ENCODE measurements at regions of chr22 and their contacts with region 1.

Region 1: GRCh38 chr22:26679003-26679629 is 21.7 kb downstream of the MIAT start:
- DNase-seq: peak; percentile 89
- ATAC-seq: peak; percentile 77
- H3K4me3 Mint-ChIP-seq: no peak overlapping the region
- H3K27ac Mint-ChIP-seq: no peak overlapping the region; the same call in 1 of the 2 replicates
- H3K4me1 Mint-ChIP-seq: peaks cover 56% of the 10 kb centered on the region
- H3K27me3 Mint-ChIP-seq: no peaks in the 10 kb centered on the region
- CTCF ChIP-seq: peak; percentile 86

Region 2: GRCh38 chr22:26751217-26751616 is 72.1 kb after region 1 on chr22:
- CTCF ChIA-PET with region 1: interaction called, 19 read pairs
- POLR2A ChIA-PET with region 1: interaction called, 4 read pairs
- DNase-seq: peak; percentile 79
- ATAC-seq: peak; percentile 93
- H3K4me3 Mint-ChIP-seq: peak overlapping the region; percentile 42
- H3K27ac Mint-ChIP-seq: peak overlapping the region; percentile 69; the same call in 1 of the 2 replicates
- H3K4me1 Mint-ChIP-seq: peaks cover 59% of the 10 kb centered on the region
- H3K27me3 Mint-ChIP-seq: no peaks in the 10 kb centered on the region
- CTCF ChIP-seq: no peak

Region 3: GRCh38 chr22:26756675-26757293 is 77.7 kb after region 1 on chr22:
- CTCF ChIA-PET with region 1: interaction called, 19 read pairs
- POLR2A ChIA-PET with region 1: interaction called, 4 read pairs
- DNase-seq: peak; percentile 73
- ATAC-seq: peak; percentile 80
- H3K4me3 Mint-ChIP-seq: peak overlapping the region; percentile 45
- H3K27ac Mint-ChIP-seq: no peak overlapping the region
- H3K4me1 Mint-ChIP-seq: peaks cover 27% of the 10 kb centered on the region
- H3K27me3 Mint-ChIP-seq: peaks cover 11% of the 10 kb centered on the region
- CTCF ChIP-seq: peak; percentile 97

Region 4: GRCh38 chr22:26828311-26828710 is 149.2 kb after region 1 on chr22:
- CTCF ChIA-PET with region 1: interaction called, 11 read pairs
- POLR2A ChIA-PET with region 1: no interaction called
- DNase-seq: no peak
- ATAC-seq: no peak
- H3K4me3 Mint-ChIP-seq: no peak overlapping the region
- H3K27ac Mint-ChIP-seq: no peak overlapping the region
- H3K4me1 Mint-ChIP-seq: no peaks in the 10 kb centered on the region
- H3K27me3 Mint-ChIP-seq: no peaks in the 10 kb centered on the region
- CTCF ChIP-seq: no peak